B cell (primary cell): ENCODE measurements at regions of chr14 and their contacts with region 1.

Region 1: DNA sequence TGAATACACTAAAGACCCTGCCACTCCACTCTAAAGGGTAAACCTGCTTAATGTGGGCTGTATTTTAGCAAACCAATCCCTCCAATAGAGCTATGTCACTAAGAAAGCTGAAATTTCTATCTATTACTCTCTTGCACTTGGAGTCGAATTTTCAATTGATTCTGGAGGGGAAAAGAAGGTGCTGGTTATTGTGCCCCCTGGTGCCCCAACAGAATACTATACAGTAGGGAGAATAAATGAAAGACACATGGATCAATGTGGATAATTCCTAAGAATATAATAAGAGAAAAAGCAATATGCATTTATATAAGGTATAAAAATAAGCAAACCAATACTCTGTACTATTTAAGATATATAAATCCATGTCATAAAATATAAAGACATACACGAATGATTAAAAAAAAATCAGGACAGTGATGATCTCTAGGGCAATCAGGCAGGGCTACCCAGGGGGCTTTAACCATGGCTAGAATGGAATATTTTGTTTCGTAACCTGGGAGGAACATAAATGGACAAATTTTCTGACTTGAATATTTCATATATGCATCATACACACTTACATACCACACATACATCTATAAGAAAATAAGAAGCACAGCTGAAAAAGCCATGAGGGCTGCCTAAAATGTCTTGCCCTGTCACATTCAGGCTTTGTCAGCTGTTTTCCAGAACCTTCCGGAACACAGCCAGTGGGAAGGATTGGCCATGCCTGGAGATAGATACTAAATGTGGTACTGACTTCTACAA is 54.4 kb downstream of the EFCAB11 start:
- DNase-seq: peak; percentile 41
- ATAC-seq: no peak
- H3K4me3 ChIP-seq: no peak overlapping the region
- H3K4me3 Mint-ChIP-seq: no peak overlapping the region
- H3K27ac ChIP-seq: no peak overlapping the region
- H3K27ac Mint-ChIP-seq: no peak overlapping the region
- H3K4me1 ChIP-seq: no peaks in the 10 kb centered on the region
- H3K4me1 Mint-ChIP-seq: no peaks in the 10 kb centered on the region
- H3K27me3 ChIP-seq: no peaks in the 10 kb centered on the region
- H3K27me3 Mint-ChIP-seq: no peaks in the 10 kb centered on the region
- CTCF ChIP-seq: peak; percentile 66

Region 2: DNA sequence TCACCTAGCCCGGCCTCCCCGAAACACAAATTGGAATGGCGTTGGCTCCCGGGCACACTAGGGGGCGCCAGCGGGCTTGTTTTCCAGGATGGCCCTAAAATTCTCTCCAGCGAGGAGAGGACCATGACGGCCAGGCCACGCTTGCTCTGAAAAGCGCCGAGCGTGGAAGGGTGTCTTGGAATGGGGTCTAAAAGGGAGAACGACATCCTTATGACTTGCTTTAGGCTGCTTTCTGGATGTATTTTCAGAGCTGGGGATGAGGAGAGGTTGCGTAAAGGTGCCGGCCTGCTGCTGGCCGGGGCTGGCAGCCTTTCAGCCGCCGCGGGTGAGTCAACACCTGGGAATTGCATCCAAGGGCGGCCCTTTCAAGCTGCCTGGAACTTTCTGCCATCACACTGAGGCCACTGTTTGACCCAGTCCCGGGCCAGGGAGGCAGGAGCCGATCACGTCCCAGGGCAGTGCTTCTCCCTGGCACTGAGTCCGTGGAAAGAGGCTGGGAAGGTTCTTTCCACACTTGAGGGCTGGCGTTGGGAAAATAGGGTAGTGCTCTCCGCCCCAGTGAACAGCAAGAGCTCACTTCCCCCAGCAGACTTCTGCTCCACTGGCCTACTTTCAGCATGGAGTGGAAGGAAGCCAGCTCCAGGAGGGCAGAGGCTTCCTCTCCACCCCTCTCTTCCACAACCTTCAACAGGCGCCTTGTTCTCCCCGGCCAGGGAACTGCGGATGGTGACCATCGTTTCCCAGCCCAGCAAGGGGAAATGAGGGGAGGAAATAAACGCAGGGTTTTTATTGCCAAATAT is 859.4 kb before region 1 on chr14:
- CTCF ChIA-PET with region 1: interaction called, 18 read pairs
- POLR2A ChIA-PET with region 1: no interaction called
- intact Hi-C with region 1: loop called (anchors 1 kb)
- DNase-seq: peak; percentile 79
- ATAC-seq: peak; percentile 68
- H3K4me3 ChIP-seq: peak overlapping the region in 4 of 5 experiments; percentile 35 to 63 (median 42)
- H3K4me3 Mint-ChIP-seq: peak overlapping the region; percentile 85
- H3K27ac ChIP-seq: no peak overlapping the region
- H3K27ac Mint-ChIP-seq: no peak overlapping the region
- H3K4me1 ChIP-seq: peaks cover 15% of the 10 kb centered on the region in 2 donors
- H3K4me1 Mint-ChIP-seq: peaks cover 15% of the 10 kb centered on the region
- H3K27me3 ChIP-seq: peaks cover 0 to 12% (median 7%) of the 10 kb centered on the region in 4 experiments
- H3K27me3 Mint-ChIP-seq: peaks cover 47% of the 10 kb centered on the region
- CTCF ChIP-seq: peak; percentile 85

Region 3: DNA sequence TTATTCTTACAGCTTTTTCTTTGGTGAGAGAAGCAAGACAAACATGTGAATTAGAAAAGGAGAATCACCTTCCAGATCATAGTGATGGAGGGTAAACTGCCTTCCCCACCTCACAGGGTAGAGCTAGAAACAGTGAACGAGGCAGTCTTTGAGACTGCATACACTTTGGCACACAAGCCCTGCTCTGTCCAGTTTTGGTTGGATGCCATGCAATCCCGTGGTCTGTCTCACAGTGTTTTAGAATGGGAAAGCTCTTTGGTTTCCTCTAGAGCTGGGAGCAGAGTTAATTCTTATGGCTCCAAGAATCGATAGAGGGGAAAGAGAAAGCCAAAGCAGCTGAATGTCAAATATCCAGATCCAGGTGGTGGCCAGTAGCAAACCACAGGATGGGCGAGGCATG is 77.6 kb after region 1 on chr14:
- CTCF ChIA-PET with region 1: no interaction called
- POLR2A ChIA-PET with region 1: no interaction called
- intact Hi-C with region 1: no loop called
- DNase-seq: no peak
- ATAC-seq: no peak
- H3K4me3 ChIP-seq: no peak overlapping the region
- H3K4me3 Mint-ChIP-seq: no peak overlapping the region
- H3K27ac ChIP-seq: no peak overlapping the region
- H3K27ac Mint-ChIP-seq: no peak overlapping the region
- H3K4me1 ChIP-seq: no peaks in the 10 kb centered on the region
- H3K4me1 Mint-ChIP-seq: no peaks in the 10 kb centered on the region
- H3K27me3 ChIP-seq: no peaks in the 10 kb centered on the region
- H3K27me3 Mint-ChIP-seq: no peaks in the 10 kb centered on the region
- CTCF ChIP-seq: no peak